ENCODE measurements at regions of chr7 and their contacts with region 1.

Region 1: DNA sequence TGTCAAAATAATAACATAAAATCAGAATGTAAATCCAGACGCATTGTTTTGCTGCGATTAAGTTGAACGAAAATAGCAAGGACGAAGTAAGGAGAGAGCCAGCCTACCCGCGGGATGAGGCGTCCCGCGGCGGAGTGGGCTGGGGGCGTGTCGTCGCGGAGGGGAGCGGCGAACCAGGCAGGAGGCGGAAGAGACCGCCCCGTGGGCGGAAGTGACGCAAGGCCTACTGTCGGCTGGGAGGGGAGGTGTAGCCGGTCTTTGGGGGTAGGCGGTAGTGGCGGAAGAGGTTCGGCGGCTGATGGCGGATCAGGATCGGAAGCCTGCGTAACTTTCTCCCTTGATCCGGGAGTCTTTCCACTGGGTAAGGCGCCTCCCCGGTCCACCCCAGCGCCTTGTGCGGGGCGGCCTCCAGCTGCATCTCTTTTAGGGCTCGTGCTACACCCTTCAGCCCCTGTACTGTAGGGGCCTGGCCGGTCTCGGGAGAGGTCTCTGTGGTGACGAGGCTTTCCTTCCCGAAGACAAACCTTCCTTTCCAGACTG is at the start of gene TAX1BP1:
- DNase-seq: peak; percentile 93
- H3K4me3 Mint-ChIP-seq: peak within 1 kb of the TSS; percentile 86
- H3K27ac Mint-ChIP-seq: peak within 1 kb of the TSS; percentile 99
- H3K4me1 Mint-ChIP-seq: peaks cover 22% of the 10 kb centered on the region
- H3K27me3 Mint-ChIP-seq: no peaks in the 10 kb centered on the region
- CTCF ChIP-seq: no peak
- total RNA-seq, gene TAX1BP1: 95.0 and 95.9 TPM in 2 replicates

Region 2: DNA sequence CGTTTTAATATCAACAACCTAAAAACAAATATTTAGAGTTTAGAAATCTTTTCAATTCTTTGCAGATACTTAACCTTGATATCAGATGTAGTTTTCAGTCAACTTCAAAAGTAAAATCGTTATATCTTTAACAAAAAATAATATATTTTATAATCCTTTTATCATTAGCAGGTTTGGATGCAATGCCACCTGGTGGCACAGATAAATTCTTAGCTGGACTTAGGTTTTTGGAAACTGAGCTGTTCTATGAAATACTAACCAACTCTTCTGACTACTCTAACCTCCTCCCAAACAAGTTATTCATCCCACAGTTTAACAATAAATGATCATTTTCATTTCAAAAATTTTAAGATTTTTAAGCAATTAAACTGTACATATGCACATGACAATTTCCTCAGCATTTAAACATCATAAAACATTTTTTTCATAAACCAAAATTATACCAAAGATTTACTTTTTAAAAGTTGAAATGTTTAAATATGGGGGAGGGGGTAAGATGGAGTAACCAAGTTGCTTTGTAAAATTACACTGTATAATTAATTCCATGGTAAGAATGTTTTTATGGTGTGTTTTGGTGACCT is 134.2 kb before region 1 on chr7:
- CTCF ChIA-PET with region 1: no interaction called
- POLR2A ChIA-PET with region 1: interaction called, 24 read pairs
- intact Hi-C with region 1: no loop called
- DNase-seq: peak; percentile 38
- H3K4me3 Mint-ChIP-seq: no peak overlapping the region
- H3K27ac Mint-ChIP-seq: no peak overlapping the region
- H3K4me1 Mint-ChIP-seq: peaks cover 13% of the 10 kb centered on the region
- H3K27me3 Mint-ChIP-seq: no peaks in the 10 kb centered on the region
- CTCF ChIP-seq: peak; percentile 27

Region 3: GRCh38 chr7:27640914-27641580 is 98.9 kb before region 1 on chr7:
- CTCF ChIA-PET with region 1: interaction called, 3 read pairs
- POLR2A ChIA-PET with region 1: interaction called, 94 read pairs
- intact Hi-C with region 1: no loop called
- DNase-seq: peak; percentile 90
- H3K4me3 Mint-ChIP-seq: peak overlapping the region; percentile 67
- H3K27ac Mint-ChIP-seq: peak overlapping the region; percentile 82
- H3K4me1 Mint-ChIP-seq: peaks cover 51% of the 10 kb centered on the region
- H3K27me3 Mint-ChIP-seq: no peaks in the 10 kb centered on the region
- CTCF ChIP-seq: no peak

Region 4: GRCh38 chr7:27677912-27678612 is 61.9 kb before region 1 on chr7:
- CTCF ChIA-PET with region 1: no interaction called
- POLR2A ChIA-PET with region 1: interaction called, 51 read pairs
- intact Hi-C with region 1: no loop called
- DNase-seq: peak; percentile 78
- H3K4me3 Mint-ChIP-seq: peak overlapping the region; percentile 26
- H3K27ac Mint-ChIP-seq: peak overlapping the region; percentile 98
- H3K4me1 Mint-ChIP-seq: peaks cover 12% of the 10 kb centered on the region
- H3K27me3 Mint-ChIP-seq: no peaks in the 10 kb centered on the region
- CTCF ChIP-seq: no peak

Region 5: GRCh38 chr7:27723085-27723484 is 16.9 kb before region 1 on chr7:
- CTCF ChIA-PET with region 1: interaction called, 3 read pairs
- POLR2A ChIA-PET with region 1: interaction called, 22 read pairs
- intact Hi-C with region 1: no loop called
- DNase-seq: peak; percentile 33
- H3K4me3 Mint-ChIP-seq: no peak overlapping the region
- H3K27ac Mint-ChIP-seq: no peak overlapping the region
- H3K4me1 Mint-ChIP-seq: no peaks in the 10 kb centered on the region
- H3K27me3 Mint-ChIP-seq: no peaks in the 10 kb centered on the region
- CTCF ChIP-seq: peak; percentile 19

Region 6: GRCh38 chr7:27774717-27775328 is 34.8 kb after region 1 on chr7:
- CTCF ChIA-PET with region 1: interaction called, 43 read pairs
- POLR2A ChIA-PET with region 1: interaction called, 41 read pairs
- intact Hi-C with region 1: no loop called
- DNase-seq: peak; percentile 48
- H3K4me3 Mint-ChIP-seq: no peak overlapping the region
- H3K27ac Mint-ChIP-seq: no peak overlapping the region
- H3K4me1 Mint-ChIP-seq: peaks cover 10% of the 10 kb centered on the region
- H3K27me3 Mint-ChIP-seq: no peaks in the 10 kb centered on the region
- CTCF ChIP-seq: peak; percentile 71